ENCODE measurements at regions of chr3 and their contacts with region 1.

Region 1: DNA sequence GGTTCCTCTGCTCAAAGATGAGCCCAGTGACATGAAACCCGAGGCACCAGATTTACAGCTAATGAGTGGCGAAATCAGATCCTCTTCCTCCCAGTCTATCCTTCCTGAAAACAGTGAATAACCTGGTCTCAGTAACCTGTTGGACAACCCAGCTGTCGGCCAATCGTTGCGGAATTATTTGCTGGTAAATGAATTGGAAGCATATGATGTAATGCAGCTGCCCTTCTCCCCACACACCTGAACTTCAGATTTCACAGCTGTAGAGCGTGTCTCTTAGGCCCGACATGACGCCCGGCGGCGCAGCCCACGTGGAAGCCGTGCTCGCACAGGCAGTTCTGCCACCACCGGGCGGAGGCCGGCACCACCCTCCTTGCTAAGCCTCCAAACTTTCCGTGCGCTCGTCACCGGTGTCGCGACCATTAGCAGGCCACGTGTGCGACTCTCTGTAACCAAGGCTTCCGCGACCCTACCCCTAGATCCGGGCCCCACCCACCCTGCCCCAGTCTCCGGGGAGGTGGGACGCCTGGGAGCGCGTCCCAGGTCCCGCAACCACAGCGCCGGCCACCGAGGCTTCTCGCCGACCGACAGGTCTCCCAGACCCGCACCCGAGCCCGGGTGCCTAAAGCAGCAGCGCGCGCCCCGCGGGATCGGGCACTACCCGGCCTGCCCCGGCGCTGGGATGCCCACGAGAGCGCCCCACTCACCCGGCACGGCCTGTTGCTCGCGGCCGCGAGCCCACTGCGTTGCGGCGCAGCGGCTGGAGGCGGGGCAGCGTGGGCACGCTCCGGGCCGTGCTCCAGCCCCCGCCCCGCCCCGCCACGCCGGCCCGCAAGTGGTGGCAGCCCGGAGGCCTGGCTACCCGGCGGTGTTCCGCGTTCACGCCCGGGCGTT is at the start of gene RIOX2:
- DNase-seq: peak; percentile 53 to 95 (median 70)

Region 2: GRCh38 chr3:97389911-97390310 is 582.0 kb before region 1 on chr3:
- intact Hi-C with region 1: no loop called
- DNase-seq: no peak

Region 3: GRCh38 chr3:97821810-97822775 is 149.8 kb before region 1 on chr3 and contains the start of gene CRYBG3:
- intact Hi-C with region 1: loop called (anchors 5 kb)
- DNase-seq: peak; percentile 60 to 97 (median 77)

Measured in posterior cingulate gyrus (tissue), 11 donors.